ENCODE measurements at regions of chr2 and their contacts with region 1.

Region 1: DNA sequence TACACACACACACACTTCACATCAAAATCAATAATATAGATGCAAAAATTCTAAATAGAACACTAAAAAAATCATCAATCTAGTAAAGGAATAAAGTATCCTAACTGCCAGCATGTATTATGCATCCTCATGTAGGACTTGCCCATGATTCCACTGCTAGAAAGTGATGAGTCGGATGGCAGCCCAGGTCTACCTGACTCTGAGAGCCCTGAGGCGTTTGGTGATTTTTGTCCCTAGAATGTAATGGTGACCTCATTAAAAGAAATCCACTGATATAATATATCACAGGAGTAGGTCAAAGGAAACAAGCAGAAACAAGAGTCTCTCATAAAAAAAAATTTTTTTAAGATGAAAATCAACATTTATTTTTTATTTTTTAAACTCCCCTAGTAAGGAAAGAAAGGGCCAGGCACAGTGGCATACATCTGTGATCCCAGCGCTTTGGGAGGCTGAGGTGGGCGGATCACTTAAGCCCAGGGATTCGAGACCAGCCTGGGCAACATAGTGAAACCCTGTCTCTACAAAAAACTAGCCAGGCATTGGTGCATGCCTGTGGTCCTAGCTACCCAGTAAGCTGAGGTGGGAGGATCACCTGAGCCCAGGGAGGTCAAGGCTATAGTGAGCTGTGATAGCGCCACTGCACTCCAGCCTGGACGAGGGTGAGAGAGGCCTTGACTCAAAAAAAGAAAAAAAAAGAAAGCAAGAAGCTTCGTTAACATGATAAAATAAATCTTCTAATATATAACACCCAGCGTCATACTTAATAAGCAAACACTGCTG is 24.4 kb upstream of the ACTG2 start:
- DNase-seq: peak; percentile 48
- H3K4me3 ChIP-seq: no peak overlapping the region
- H3K27ac ChIP-seq: no peak overlapping the region
- H3K4me1 ChIP-seq: peaks cover 4% of the 10 kb centered on the region
- H3K27me3 ChIP-seq: no peaks in the 10 kb centered on the region
- CTCF ChIP-seq: no peak

Region 2: DNA sequence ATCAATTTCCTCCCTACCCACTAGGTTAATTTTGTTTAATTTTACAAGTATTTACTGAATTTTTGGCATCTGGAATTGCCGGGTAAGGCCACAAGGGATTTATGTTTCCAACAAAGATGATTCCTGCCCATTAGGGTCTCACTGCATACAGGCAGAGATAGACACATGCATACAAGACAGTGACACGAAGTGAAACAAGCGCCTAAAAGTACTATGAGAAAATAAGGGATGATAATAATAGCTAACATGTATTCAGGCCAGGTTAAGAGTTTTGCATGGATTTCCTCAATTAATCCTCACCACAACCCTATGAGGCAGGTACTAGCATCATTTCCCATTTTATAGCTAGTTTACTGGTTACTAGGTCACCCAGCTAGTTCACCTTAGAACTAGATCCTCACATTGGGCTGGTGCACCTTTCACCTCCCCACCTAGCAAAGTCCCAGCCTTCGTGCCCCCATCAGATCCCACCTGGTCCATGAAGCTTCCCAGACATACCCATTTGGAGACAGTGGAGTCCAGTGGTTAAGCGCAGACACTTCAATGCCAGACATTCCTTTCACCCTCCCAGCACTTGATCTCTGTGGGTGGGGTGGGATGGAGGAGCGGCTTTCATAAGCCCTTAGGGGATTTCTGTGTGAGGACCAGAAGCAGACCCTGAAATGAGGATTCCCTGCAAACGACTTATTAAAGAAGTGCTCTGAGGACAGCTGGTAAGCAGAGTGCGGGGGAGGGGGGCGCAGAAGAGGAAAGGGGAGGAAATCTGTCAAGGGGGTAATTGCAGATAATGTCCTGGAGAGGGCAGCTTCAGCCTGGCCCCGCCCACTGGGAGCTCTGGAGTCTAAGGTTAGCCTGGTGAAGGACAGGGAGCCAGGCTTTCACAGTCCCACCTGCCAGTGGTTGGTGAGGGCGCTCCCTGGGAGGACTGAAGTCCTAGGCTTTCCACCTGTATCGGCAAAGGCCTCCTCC is 52.5 kb after region 1 on chr2:
- CTCF ChIA-PET with region 1: no interaction called
- dilution Hi-C with region 1: loop called (anchors 5 kb)
- in situ Hi-C with region 1: no loop called
- intact Hi-C with region 1: no loop called
- DNase-seq: no peak
- H3K4me3 ChIP-seq: no peak overlapping the region
- H3K27ac ChIP-seq: no peak overlapping the region
- H3K4me1 ChIP-seq: peaks cover 8% of the 10 kb centered on the region
- H3K27me3 ChIP-seq: no peaks in the 10 kb centered on the region
- CTCF ChIP-seq: peak in 1 of 2 donors; percentile 41